Activated CD4-positive, alpha-beta memory T cell treated with anti-CD3 and anti-CD28 coated beads for 36 hours (primary cell): ENCODE measurements at regions of chr19 and their contacts with region 1.

Region 1: GRCh38 chr19:42283143-42284065 is 14.4 kb downstream of the CIC start:
- DNase-seq: peak; percentile 97
- H3K4me3 Mint-ChIP-seq: no peak overlapping the region
- H3K27ac Mint-ChIP-seq: no peak overlapping the region
- H3K4me1 Mint-ChIP-seq: peaks cover 44% of the 10 kb centered on the region
- H3K27me3 Mint-ChIP-seq: no peaks in the 10 kb centered on the region

Region 2: GRCh38 chr19:42143341-42144234 is 139.8 kb before region 1 on chr19:
- CTCF ChIA-PET with region 1: no interaction called
- POLR2A ChIA-PET with region 1: no interaction called
- intact Hi-C with region 1: no loop called
- DNase-seq: no peak
- H3K4me3 Mint-ChIP-seq: no peak overlapping the region
- H3K27ac Mint-ChIP-seq: no peak overlapping the region
- H3K4me1 Mint-ChIP-seq: peaks cover 5% of the 10 kb centered on the region
- H3K27me3 Mint-ChIP-seq: no peaks in the 10 kb centered on the region

Region 3: GRCh38 chr19:42199440-42200115 is 83.8 kb before region 1 on chr19:
- CTCF ChIA-PET with region 1: interaction called, 4 read pairs
- POLR2A ChIA-PET with region 1: no interaction called
- intact Hi-C with region 1: loop called (anchors 2 kb)
- DNase-seq: peak; percentile 86
- H3K4me3 Mint-ChIP-seq: peak overlapping the region; percentile 65
- H3K27ac Mint-ChIP-seq: peak overlapping the region; percentile 98
- H3K4me1 Mint-ChIP-seq: peaks cover 80% of the 10 kb centered on the region
- H3K27me3 Mint-ChIP-seq: no peaks in the 10 kb centered on the region

Region 4: GRCh38 chr19:42219812-42220750 is 63.3 kb before region 1 on chr19 and contains the start of gene ZNF526:
- CTCF ChIA-PET with region 1: interaction called, 21 read pairs
- POLR2A ChIA-PET with region 1: interaction called, 3 read pairs
- intact Hi-C with region 1: loop called (anchors 1 kb)
- DNase-seq: peak; percentile 98
- H3K4me3 Mint-ChIP-seq: peak within 1 kb of the TSS; percentile 92
- H3K27ac Mint-ChIP-seq: peak within 1 kb of the TSS; percentile 99
- H3K4me1 Mint-ChIP-seq: peaks cover 43% of the 10 kb centered on the region
- H3K27me3 Mint-ChIP-seq: peaks cover 1% of the 10 kb centered on the region
- total RNA-seq, gene ZNF526: 12.3 to 14.9 TPM

Region 5: DNA sequence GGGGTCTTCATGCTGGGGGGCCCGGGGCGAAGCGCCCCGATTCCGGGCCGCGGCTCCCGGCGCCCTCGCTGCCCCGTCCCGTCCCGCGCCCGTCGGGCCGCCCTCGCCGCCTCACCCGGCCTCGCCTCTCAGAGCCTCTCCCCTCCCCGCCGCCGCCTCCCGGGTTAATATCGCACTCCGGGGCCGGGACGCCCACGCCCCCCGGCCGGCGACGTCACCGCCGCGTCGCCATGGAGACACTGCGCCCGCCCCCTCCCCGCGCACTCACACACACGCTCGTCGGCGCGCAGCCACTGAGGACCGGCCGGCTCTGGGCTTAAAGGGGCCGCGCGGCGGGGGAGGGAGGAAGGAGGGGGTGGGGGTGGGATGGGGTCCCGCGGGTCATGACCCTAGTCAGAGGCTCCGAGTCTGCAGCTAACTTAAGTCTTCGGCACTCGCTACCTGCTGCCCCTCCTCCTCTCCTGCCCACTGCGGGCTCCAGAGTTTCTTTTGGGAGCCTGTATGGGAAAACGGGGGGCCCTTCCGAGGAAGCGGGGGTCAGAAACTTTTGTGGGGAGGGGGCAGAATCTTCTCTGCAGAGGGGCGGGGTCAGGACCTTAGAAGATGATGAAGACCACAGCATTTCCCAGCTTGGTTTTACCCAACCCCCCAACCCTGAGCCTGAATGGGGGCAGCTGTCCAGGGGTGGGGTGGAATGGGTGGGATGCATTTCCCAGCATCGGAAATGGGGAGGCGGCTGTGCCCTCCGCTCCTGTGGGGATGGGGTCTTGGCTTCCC is 28.2 kb before region 1 on chr19 and contains the start of gene ERF:
- CTCF ChIA-PET with region 1: interaction called, 22 read pairs
- POLR2A ChIA-PET with region 1: interaction called, 5 read pairs
- intact Hi-C with region 1: loop called (anchors 1 kb)
- DNase-seq: peak; percentile 95
- H3K4me3 Mint-ChIP-seq: peak within 1 kb of the TSS; percentile 80
- H3K27ac Mint-ChIP-seq: peak within 1 kb of the TSS; percentile 79
- H3K4me1 Mint-ChIP-seq: peaks cover 30% of the 10 kb centered on the region
- H3K27me3 Mint-ChIP-seq: no peaks in the 10 kb centered on the region
- total RNA-seq, gene ERF: 43.1 to 56.5 TPM

Region 6: DNA sequence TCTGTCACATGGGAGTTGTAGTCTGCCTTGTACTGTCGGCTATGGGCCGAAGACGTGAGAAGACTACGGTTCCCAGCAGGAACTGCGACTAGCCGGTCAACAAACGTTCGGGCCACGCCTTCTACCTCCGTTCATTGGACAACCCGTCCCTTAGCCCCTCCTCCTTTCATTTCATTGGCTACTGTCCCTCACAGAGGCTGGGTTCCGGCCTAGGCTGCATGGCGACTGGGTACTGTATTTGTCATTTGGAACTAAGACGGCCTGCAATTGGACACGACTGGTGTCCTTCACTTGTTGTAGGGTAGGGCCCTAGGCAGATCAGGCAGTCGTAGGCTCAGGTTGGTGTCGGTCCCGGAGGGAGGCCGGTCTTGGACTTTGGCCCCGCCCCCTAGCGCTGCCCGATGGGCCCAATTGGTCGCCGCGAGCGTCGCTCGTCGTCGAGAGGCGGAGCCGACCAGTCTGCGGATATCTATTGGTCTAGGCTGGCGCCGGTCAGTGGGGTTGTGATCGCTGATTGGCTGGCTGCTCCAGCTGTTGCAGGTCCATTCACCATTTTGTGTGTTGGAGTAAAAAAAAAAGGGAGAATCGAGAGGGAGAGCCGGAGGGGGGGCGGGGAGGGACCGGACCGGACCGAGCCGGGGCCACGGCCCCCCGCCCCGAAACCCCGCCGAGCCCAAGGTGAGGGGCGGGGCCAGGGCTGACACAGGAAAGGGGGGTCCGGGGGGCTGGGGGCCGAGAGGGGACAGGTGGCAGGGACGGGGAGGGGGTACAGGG is 14.5 kb before region 1 on chr19 and contains the start of gene CIC:
- CTCF ChIA-PET with region 1: interaction called, 48 read pairs
- POLR2A ChIA-PET with region 1: interaction called, 15 read pairs
- intact Hi-C with region 1: loop called (anchors 1 kb)
- DNase-seq: peak; percentile 99
- H3K4me3 Mint-ChIP-seq: no peak within 1 kb of the TSS
- H3K27ac Mint-ChIP-seq: no peak within 1 kb of the TSS
- H3K4me1 Mint-ChIP-seq: peaks cover 23% of the 10 kb centered on the region
- H3K27me3 Mint-ChIP-seq: no peaks in the 10 kb centered on the region
- total RNA-seq, gene CIC: 56.9 to 64.2 TPM

Region 7: DNA sequence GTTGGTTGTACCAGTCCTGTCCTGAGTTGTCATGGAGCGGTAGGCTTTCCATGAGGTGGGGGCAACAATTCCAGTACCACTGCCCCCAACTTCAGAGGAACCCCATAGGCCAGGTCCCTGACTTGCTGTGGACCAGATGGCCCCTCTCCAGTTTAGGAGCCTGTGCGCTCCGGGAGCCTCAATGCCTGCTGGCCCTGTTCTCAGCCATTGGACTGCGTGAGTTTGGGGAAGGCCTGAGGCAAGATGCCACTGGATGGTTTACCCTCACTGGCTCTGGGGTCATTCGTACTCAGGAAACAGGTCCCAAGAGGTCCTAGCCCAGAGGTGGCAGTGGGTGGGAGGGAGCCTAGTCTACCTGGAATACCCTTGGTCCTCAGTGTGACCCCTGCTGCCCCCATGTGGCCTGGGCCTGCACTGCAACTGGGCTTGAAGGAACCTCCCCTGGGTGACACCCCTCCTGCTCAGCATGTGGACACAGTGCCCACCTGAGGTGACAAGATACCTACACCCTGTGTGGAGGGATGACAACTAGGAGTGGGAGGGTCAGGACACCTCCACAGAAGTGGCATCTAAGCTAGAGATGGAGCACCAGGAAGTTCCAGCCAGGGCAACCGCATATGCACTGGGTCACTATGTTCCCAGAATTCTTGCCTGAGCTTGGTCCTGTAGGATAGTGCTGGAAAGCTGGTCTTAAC is 12.6 kb after region 1 on chr19:
- CTCF ChIA-PET with region 1: interaction called, 12 read pairs
- POLR2A ChIA-PET with region 1: no interaction called
- intact Hi-C with region 1: no loop called
- DNase-seq: peak; percentile 92
- H3K4me3 Mint-ChIP-seq: no peak overlapping the region
- H3K27ac Mint-ChIP-seq: peak overlapping the region; percentile 28
- H3K4me1 Mint-ChIP-seq: peaks cover 9% of the 10 kb centered on the region
- H3K27me3 Mint-ChIP-seq: no peaks in the 10 kb centered on the region

Region 8: DNA sequence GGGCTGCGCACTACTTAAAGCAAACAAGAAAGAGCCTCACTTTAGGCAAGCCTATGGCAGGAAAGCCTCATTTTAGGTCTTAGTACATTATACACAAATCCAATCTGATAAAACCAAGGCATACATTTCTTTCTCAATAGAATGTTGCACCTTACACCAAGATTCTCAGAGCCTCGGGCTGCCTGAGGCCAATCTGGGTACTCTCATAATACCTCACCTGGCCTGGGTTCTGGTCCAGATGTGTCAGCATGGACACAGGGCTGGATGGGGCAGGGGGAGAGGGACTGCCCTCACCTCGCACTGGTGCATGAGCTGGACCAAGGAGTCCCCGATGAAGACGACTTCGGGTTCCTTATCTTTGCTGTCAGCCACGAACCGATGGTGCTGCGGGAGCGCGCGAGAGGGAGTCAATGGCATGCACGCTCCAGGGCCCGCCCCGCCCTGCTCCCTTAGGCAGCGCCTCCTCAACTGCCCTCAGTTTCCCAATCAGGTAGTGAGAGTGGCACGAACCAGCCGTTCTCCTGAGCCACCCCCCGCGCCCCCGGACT is 18.3 kb after region 1 on chr19 and contains the start of gene PRR19:
- CTCF ChIA-PET with region 1: interaction called, 12 read pairs
- POLR2A ChIA-PET with region 1: interaction called, 4 read pairs
- intact Hi-C with region 1: loop called (anchors 1 kb)
- DNase-seq: peak; percentile 41
- H3K4me3 Mint-ChIP-seq: peak within 1 kb of the TSS; percentile 86
- H3K27ac Mint-ChIP-seq: peak within 1 kb of the TSS; percentile 85
- H3K4me1 Mint-ChIP-seq: peaks cover 25% of the 10 kb centered on the region
- H3K27me3 Mint-ChIP-seq: no peaks in the 10 kb centered on the region
- total RNA-seq, gene PRR19: 0.61 to 0.81 TPM

Region 9: DNA sequence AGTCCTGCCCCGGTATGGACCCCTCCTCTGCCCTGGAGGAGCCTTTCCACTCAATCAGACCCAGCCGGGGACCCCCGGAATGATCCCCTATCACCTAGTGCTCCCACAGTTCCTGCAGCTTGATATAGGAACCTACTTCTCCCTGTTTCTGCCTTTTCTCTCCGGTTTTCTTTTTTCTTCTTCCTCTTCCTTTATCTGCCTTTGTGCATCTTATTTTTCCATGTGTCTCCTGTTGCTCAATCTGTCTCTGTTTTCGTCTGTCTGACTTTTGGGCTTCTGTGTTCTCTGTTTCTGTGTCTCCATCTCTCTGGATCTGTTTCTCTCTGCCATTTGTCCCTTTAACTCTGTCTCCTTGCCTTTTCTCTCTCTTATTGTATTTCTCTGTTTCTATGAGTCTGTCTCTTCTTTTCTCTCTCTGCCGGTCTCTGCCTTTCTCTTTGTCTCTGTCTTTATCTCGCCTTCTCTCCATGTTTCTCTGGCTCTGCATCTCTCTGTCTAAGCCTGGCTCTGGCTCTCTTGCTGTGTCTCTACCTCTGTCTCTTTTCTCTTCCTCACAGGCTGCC is 52.1 kb after region 1 on chr19:
- CTCF ChIA-PET with region 1: no interaction called
- POLR2A ChIA-PET with region 1: no interaction called
- intact Hi-C with region 1: no loop called
- DNase-seq: no peak
- H3K4me3 Mint-ChIP-seq: no peak overlapping the region
- H3K27ac Mint-ChIP-seq: no peak overlapping the region
- H3K4me1 Mint-ChIP-seq: no peaks in the 10 kb centered on the region
- H3K27me3 Mint-ChIP-seq: no peaks in the 10 kb centered on the region

Region 10: DNA sequence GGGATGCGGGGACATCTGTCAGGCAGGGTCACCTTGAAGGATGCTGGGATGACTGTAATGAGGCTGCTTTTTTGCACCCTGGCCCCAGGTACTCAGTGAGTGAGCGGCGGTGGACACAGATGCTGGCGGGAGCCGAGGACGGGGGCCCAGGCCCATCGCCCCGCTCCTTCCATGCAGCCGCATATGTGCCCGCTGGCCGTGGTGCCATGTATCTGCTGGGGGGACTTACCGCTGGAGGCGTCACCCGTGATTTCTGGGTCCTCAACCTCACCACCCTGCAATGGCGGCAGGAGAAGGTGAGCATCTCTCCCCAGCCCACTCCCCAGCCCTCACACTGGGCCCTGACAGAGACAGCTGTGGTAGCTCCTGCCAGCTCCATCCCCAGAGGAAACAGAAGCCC is 73.3 kb after region 1 on chr19:
- CTCF ChIA-PET with region 1: no interaction called
- POLR2A ChIA-PET with region 1: no interaction called
- intact Hi-C with region 1: no loop called
- DNase-seq: no peak
- H3K4me3 Mint-ChIP-seq: no peak overlapping the region
- H3K27ac Mint-ChIP-seq: no peak overlapping the region
- H3K4me1 Mint-ChIP-seq: no peaks in the 10 kb centered on the region
- H3K27me3 Mint-ChIP-seq: no peaks in the 10 kb centered on the region

Region 11: GRCh38 chr19:42370626-42371170 is 87.3 kb after region 1 on chr19:
- CTCF ChIA-PET with region 1: no interaction called
- POLR2A ChIA-PET with region 1: no interaction called
- intact Hi-C with region 1: no loop called
- DNase-seq: no peak
- H3K4me3 Mint-ChIP-seq: no peak overlapping the region
- H3K27ac Mint-ChIP-seq: no peak overlapping the region
- H3K4me1 Mint-ChIP-seq: no peaks in the 10 kb centered on the region
- H3K27me3 Mint-ChIP-seq: no peaks in the 10 kb centered on the region